Activated CD8-positive, alpha-beta T cell treated with anti-CD3 and anti-CD28 coated beads for 36 hours (primary cell): ENCODE measurements at regions of chr12 and their contacts with region 1.

Region 1: DNA sequence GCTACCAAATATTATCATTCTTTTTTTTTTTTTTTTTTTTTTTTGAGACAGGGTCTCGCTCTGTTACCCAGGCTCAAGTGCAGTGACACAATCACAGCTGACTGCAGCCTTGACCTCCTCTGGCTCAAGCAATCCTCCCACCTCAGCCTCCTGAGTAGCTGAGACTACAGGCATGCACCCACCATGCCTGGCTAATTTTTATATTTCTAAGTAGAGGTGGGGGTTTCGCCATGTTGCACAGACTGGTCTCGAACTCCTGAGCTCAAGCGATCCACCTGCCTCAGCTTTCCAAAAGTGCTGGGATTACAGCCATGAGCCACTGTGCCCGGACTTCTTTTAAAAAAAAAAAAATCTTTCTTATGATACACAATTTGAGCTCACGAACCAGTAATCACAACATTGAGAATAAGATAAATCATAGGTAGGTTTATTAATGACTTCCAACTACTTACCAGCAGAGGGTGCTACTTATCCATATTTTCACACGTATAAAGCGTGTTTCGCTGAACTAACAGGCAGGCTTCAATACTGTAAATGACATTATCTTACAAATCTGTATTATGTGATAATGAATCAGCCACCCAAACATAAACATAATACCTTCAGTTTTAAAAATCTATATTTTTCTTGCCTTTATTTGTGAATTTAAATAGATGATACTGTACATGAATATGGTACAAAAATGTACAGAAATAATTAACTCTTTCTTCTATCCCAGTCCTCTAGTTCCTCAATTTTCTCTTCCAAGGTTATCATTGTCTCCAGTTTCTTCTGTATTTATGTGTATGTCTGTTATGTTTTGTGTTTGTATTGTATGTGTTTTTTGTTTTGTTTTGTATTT is 42.5 kb upstream of the BCAT1 start:
- DNase-seq: no peak
- ATAC-seq: peak; percentile 86
- H3K4me3 Mint-ChIP-seq: no peak overlapping the region
- H3K27ac Mint-ChIP-seq: no peak overlapping the region
- H3K4me1 Mint-ChIP-seq: no peaks in the 10 kb centered on the region
- H3K27me3 Mint-ChIP-seq: no peaks in the 10 kb centered on the region
- CTCF ChIP-seq: peak; percentile 86

Region 2: GRCh38 chr12:24798335-24798734 is 193.1 kb before region 1 on chr12:
- CTCF ChIA-PET with region 1: no interaction called
- POLR2A ChIA-PET with region 1: no interaction called
- intact Hi-C with region 1: no loop called
- DNase-seq: no peak
- ATAC-seq: peak; percentile 45
- H3K4me3 Mint-ChIP-seq: no peak overlapping the region
- H3K27ac Mint-ChIP-seq: no peak overlapping the region
- H3K4me1 Mint-ChIP-seq: peaks cover 13% of the 10 kb centered on the region
- H3K27me3 Mint-ChIP-seq: no peaks in the 10 kb centered on the region
- CTCF ChIP-seq: no peak

Region 3: GRCh38 chr12:25052196-25052913 is 60.9 kb after region 1 on chr12:
- CTCF ChIA-PET with region 1: interaction called, 15 read pairs
- POLR2A ChIA-PET with region 1: no interaction called
- intact Hi-C with region 1: loop called (anchors 5 kb)
- DNase-seq: peak; percentile 64
- ATAC-seq: peak; percentile 72
- H3K4me3 Mint-ChIP-seq: peak overlapping the region; percentile 96
- H3K27ac Mint-ChIP-seq: peak overlapping the region; percentile 100
- H3K4me1 Mint-ChIP-seq: peaks cover 32% of the 10 kb centered on the region
- H3K27me3 Mint-ChIP-seq: no peaks in the 10 kb centered on the region
- CTCF ChIP-seq: no peak

Region 4: GRCh38 chr12:25121916-25122315 is 130.5 kb after region 1 on chr12:
- CTCF ChIA-PET with region 1: interaction called, 52 read pairs
- POLR2A ChIA-PET with region 1: no interaction called
- intact Hi-C with region 1: no loop called
- DNase-seq: peak; percentile 9
- ATAC-seq: peak; percentile 13
- H3K4me3 Mint-ChIP-seq: no peak overlapping the region
- H3K27ac Mint-ChIP-seq: no peak overlapping the region
- H3K4me1 Mint-ChIP-seq: peaks cover 4% of the 10 kb centered on the region
- H3K27me3 Mint-ChIP-seq: no peaks in the 10 kb centered on the region
- CTCF ChIP-seq: no peak

Region 5: DNA sequence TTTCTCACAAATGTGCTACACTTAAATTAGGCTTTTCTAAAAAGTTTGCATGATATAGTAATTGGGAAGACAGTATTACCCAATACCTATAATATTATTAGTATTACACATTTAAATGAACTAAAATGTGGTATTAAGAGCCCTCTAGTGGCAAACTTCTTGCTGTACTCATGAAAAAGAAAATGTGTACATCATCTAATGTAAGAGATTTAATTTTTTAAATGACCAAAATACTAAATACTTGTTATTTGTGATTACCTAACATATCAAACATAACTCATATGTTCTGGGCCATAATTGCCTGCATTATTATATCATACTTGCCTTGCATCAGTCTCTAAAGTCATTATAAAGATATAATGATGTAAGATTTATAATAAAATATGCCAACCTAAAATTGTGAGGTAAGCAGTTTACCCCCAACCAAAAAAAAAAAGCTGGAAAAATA is 139.3 kb after region 1 on chr12:
- CTCF ChIA-PET with region 1: interaction called, 52 read pairs
- POLR2A ChIA-PET with region 1: no interaction called
- intact Hi-C with region 1: loop called (anchors 1 kb)
- DNase-seq: no peak
- ATAC-seq: no peak
- H3K4me3 Mint-ChIP-seq: no peak overlapping the region
- H3K27ac Mint-ChIP-seq: no peak overlapping the region
- H3K4me1 Mint-ChIP-seq: no peaks in the 10 kb centered on the region
- H3K27me3 Mint-ChIP-seq: no peaks in the 10 kb centered on the region
- CTCF ChIP-seq: peak; percentile 66

Region 6: DNA sequence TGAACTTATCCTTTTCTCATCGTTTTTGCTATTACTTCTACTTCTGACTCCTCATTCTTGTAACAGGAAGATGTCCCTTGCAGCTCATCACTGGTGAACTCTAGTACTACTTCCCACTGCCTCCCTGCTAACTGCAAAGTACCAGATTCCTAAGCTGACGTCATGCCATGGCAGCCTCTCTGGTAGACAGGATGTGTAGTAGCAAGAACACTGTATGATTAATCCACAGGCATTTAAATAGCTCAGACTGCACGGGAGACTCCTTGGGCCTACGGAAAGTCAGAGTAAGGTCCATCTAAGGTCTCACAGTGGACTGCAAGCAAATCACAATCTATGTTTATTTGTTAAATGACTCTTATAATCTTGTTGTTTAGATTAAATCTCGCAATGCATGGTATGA is 160.0 kb after region 1 on chr12:
- CTCF ChIA-PET with region 1: interaction called, 46 read pairs
- POLR2A ChIA-PET with region 1: no interaction called
- intact Hi-C with region 1: no loop called
- DNase-seq: no peak
- ATAC-seq: no peak
- H3K4me3 Mint-ChIP-seq: no peak overlapping the region
- H3K27ac Mint-ChIP-seq: no peak overlapping the region
- H3K4me1 Mint-ChIP-seq: peaks cover 5% of the 10 kb centered on the region
- H3K27me3 Mint-ChIP-seq: no peaks in the 10 kb centered on the region
- CTCF ChIP-seq: no peak